Activated CD4-positive, alpha-beta T cell treated with anti-CD3 and anti-CD28 coated beads for 36 hours (primary cell): ENCODE measurements at regions of chr13 and their contacts with region 1.

Region 1: DNA sequence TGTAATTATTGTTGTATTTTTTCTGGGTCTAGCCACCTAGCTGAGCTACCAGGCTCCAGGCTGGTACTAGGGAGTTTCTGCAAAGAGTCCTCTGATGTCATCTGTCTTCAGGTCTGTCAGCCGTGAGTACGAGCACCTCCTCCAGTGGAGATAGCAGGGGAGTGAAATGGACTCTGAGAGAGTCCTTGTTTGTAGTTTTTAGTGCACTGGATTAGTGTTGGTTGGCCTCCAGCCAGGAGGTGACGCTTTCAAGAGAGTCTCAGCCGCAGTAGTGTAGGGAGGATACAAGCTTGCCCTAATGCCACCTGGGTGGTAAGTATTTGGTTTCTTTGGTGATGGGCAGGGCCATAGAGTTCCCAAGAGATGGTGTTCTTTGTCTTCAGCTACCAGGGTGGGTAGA is 384.8 kb downstream of the SLC7A1 start:
- DNase-seq: no peak
- ATAC-seq: no peak
- H3K4me3 Mint-ChIP-seq: no peak overlapping the region
- H3K27ac Mint-ChIP-seq: no peak overlapping the region
- H3K4me1 Mint-ChIP-seq: no peaks in the 10 kb centered on the region
- H3K27me3 Mint-ChIP-seq: no peaks in the 10 kb centered on the region

Region 2: DNA sequence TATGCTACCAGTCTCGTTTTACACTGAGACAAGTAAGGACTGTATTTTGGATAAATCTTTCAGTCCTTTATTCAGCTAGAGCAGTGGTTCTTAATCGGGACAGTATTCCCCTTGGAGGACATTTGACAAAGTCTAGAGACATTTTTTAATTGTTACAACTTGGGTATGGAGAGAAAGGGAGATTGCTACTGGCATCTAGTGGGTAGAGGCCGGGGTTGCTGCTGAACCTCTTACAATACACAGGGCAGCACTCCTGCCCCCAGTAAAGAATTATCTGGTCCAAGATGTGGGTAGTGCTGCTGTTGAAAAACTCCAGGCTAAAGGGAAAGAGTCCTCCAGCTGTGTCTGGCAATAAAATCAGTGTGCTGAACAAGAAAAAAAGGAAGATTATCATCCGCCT is 50.0 kb after region 1 on chr13:
- CTCF ChIA-PET with region 1: no interaction called
- POLR2A ChIA-PET with region 1: no interaction called
- intact Hi-C with region 1: no loop called
- DNase-seq: no peak
- ATAC-seq: no peak
- H3K4me3 Mint-ChIP-seq: no peak overlapping the region
- H3K27ac Mint-ChIP-seq: no peak overlapping the region
- H3K4me1 Mint-ChIP-seq: no peaks in the 10 kb centered on the region
- H3K27me3 Mint-ChIP-seq: peaks cover 6% of the 10 kb centered on the region

Region 3: DNA sequence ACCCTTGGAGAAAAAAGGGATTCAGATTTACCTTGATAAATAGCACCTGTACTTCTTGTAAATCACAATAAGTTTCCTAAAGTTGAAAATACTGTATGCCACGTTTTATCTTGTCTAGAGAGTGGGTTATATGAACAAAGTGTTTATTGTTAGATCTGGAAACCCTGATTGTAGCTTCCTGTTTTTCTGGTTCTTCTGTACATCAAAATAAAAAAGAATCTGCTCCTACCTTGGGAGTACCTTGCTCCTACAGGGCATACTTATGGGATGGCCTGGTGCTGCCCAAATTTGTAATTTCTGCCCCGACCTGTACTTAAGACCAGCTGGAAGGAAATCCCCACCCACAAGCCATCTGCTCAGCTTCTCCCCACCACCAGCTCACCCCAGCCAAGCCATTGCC is 143.7 kb after region 1 on chr13:
- CTCF ChIA-PET with region 1: no interaction called
- POLR2A ChIA-PET with region 1: no interaction called
- intact Hi-C with region 1: loop called in 1 of 2 experiments (anchors 2 kb)
- DNase-seq: no peak
- ATAC-seq: no peak
- H3K4me3 Mint-ChIP-seq: no peak overlapping the region
- H3K27ac Mint-ChIP-seq: no peak overlapping the region
- H3K4me1 Mint-ChIP-seq: no peaks in the 10 kb centered on the region
- H3K27me3 Mint-ChIP-seq: peaks cover 10% of the 10 kb centered on the region

Region 4: GRCh38 chr13:29561918-29562317 is 351.2 kb after region 1 on chr13:
- CTCF ChIA-PET with region 1: no interaction called
- POLR2A ChIA-PET with region 1: no interaction called
- intact Hi-C with region 1: no loop called
- DNase-seq: no peak
- ATAC-seq: no peak
- H3K4me3 Mint-ChIP-seq: no peak overlapping the region
- H3K27ac Mint-ChIP-seq: no peak overlapping the region
- H3K4me1 Mint-ChIP-seq: peaks cover 49% of the 10 kb centered on the region
- H3K27me3 Mint-ChIP-seq: no peaks in the 10 kb centered on the region

Region 5: DNA sequence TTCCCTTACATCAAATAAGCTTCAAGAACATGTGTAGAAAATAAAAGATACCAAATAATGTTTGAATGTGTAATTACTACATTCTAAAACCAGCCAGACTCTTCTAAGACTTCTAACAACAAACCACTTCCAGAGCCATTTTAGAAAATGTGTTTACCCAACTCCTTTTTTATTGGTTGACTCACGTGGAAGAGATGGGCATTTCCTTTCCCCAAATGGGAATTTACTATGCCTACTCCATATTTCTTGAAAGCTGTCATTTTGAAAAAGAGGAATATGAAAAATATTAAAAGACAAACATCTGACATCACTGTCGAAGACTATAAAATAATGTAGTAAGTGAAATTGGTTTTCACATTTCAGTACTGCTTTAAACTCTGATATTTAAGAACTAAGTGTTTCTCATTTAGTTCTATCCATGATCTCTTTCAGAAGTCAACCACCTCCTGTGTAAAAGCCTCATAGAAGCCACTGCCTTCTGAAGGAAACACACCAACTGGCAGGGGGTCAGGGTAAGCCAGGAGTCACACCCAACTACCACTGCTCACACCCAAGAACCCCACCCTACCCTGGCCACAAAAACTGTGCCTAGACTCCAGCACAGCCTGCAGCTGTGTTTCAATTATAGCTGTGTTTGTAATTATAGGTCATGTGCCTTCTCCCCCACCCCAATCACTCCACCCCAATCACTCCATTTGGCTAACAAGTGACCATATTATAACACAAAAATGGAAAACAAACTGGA is 552.9 kb after region 1 on chr13:
- CTCF ChIA-PET with region 1: no interaction called
- POLR2A ChIA-PET with region 1: no interaction called
- intact Hi-C with region 1: no loop called
- DNase-seq: no peak
- ATAC-seq: no peak
- H3K4me3 Mint-ChIP-seq: no peak overlapping the region
- H3K27ac Mint-ChIP-seq: no peak overlapping the region
- H3K4me1 Mint-ChIP-seq: peaks cover 28% of the 10 kb centered on the region
- H3K27me3 Mint-ChIP-seq: no peaks in the 10 kb centered on the region

Region 6: DNA sequence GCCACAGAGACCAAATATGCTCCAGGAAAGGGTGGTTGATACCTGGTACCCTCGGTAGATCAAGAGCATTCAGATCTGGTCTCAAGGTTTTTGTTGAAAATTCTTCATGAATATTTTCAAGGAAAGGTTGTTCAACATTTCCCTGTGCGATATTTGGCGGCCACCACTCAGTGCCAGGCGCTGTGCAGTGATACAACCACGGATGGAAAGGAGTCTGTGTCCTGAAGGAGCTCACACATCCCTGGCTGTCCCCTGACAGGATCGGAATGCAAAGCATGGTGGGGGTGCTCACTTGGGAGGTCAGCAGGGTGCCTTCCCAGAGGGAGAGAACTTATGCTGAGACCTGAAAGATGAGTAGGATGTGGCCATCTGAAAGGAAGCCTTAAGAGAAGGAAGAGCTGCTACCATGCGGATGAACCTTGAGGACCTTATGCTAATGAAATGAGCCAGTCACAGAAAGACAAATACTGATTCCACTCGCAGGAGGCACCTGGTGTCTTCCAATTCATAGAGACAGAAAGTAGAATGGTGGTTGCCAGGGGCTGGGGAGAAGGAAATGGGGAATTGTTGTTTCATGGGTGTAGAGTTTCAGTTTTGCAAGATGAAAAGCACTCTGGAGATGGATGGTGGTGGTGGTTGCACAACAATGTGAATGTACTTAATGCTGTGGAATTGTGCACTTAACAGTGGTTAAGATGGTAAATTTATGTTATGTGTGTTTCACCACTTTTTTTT is 1909.5 kb after region 1 on chr13:
- CTCF ChIA-PET with region 1: no interaction called
- POLR2A ChIA-PET with region 1: no interaction called
- intact Hi-C with region 1: no loop called
- DNase-seq: no peak
- ATAC-seq: no peak
- H3K4me3 Mint-ChIP-seq: no peak overlapping the region
- H3K27ac Mint-ChIP-seq: no peak overlapping the region
- H3K4me1 Mint-ChIP-seq: peaks cover 2% of the 10 kb centered on the region
- H3K27me3 Mint-ChIP-seq: peaks cover 43% of the 10 kb centered on the region